Endothelial cell of umbilical vein (primary cell): ENCODE measurements at regions of chr3 and their contacts with region 1.

Region 1: DNA sequence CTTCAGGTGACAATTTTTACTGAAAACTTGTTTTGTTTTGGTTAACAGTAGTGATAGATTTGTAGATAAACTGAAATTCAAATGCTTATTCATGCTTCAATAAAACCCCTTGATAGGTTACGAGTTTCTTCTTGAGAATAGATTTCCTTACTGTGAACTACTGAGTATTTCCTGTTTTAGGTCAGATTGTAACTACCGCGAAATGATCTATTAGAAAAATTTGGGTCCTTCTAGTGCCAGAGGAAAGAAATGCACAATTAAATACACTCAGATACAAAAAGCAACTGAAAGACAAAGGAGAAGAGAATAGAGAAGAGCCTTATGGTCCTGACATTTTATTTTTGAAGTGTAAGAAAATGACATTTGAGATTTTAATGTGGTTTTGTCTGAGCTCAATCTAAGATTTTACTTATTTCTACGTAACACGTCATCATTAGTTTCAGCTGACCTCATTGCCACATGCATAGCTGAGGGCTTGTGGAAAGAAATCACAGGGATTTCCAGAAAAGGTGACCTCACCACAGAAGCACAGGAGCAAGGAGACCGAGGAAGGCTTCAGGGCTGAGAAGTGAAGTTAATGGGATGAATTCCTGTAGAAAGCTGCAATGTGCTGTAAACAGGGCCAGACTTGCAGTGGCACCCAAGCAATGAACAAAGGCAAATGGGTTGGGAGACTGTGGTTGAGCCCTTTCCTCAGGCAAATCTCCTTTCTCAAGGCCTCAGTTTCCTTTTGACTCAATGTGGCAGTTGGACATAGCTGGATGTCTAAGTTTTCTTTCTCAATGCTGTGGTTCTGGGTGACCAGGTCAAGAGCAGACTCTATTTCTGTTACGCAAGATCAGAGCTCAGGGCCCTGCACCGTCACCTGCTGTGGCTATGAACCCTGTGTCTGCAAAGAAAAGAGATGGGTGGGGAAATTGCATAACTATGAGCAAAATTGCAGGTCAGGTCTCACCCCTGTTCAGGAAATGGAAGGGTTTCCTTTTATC is 252.0 kb upstream of the TBL1XR1 start:
- DNase-seq: no peak
- H3K4me3 ChIP-seq: no peak overlapping the region
- H3K27ac ChIP-seq: no peak overlapping the region
- H3K4me1 ChIP-seq: peaks cover 23% of the 10 kb centered on the region
- H3K27me3 ChIP-seq: no peaks in the 10 kb centered on the region
- CTCF ChIP-seq: no peak
- POLR2A ChIP-seq: no peak

Region 2: DNA sequence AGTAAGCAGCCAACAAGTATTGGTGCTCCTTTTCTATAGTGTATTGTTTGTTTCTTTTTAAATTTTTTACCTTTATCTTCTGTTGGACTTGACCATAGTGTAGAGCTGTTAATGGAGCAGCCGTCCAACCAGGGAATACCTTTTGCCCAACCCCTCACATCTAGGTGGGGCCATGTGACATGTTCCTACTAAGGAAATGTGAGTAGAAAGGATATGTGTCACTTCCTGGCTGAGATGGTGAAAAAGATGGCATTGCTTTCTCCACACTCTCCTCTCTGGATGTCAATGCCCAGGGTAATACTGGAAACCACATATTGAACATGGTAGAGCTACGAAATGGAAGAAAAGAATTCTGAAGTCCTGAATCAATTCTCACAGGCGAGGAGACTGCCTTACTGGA is 470.8 kb before region 1 on chr3:
- CTCF ChIA-PET with region 1: no interaction called
- POLR2A ChIA-PET with region 1: no interaction called
- dilution Hi-C with region 1: no loop called
- intact Hi-C with region 1: no loop called
- DNase-seq: peak; percentile 34
- H3K4me3 ChIP-seq: no peak overlapping the region
- H3K27ac ChIP-seq: peak overlapping the region; percentile 2
- H3K4me1 ChIP-seq: peaks cover 9% of the 10 kb centered on the region
- H3K27me3 ChIP-seq: no peaks in the 10 kb centered on the region
- CTCF ChIP-seq: no peak
- POLR2A ChIP-seq: no peak

Region 3: DNA sequence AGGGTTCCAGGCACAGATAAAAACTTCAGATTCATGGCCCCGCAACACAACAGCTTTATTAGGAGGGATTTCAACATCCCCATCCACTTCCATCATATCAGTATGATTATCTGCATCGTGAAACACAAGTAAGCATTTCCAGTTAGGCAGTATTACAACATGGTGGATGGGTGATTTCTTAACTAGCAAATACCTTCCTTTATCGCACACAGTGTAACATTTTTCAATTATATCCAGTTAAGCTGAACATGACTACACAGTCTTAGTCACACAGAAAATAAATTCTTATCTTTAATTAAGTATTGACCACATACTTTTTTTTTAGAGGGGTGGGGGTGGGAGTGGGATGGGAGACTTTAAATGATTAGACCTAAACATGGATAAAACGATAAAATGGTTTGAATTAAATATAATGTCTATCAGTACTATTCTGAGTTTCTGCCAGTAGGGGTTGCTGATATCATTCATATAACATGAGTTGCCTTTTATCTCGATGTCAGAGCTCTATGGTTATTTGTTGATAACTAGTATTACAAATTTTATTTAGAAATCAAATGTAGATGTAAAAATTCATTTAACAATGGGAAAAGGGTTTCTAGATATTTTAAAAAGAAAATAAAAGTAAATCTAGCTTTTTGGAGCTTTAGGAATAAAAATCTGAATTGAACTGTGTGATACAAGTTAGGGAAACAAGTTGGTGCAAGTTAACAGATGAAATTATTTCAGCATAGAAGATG is 398.6 kb before region 1 on chr3:
- CTCF ChIA-PET with region 1: no interaction called
- POLR2A ChIA-PET with region 1: no interaction called
- dilution Hi-C with region 1: no loop called
- intact Hi-C with region 1: loop called (anchors 2 kb)
- DNase-seq: peak; percentile 71
- H3K4me3 ChIP-seq: no peak overlapping the region
- H3K27ac ChIP-seq: no peak overlapping the region
- H3K4me1 ChIP-seq: no peaks in the 10 kb centered on the region
- H3K27me3 ChIP-seq: no peaks in the 10 kb centered on the region
- CTCF ChIP-seq: no peak
- POLR2A ChIP-seq: no peak

Region 4: GRCh38 chr3:177345049-177345972 is 104.0 kb before region 1 on chr3:
- CTCF ChIA-PET with region 1: no interaction called
- POLR2A ChIA-PET with region 1: no interaction called
- dilution Hi-C with region 1: no loop called
- intact Hi-C with region 1: loop called (anchors 1 kb)
- DNase-seq: peak; percentile 97
- H3K4me3 ChIP-seq: peak overlapping the region in 1 of 3 experiments; percentile 28
- H3K27ac ChIP-seq: peak overlapping the region; percentile 99
- H3K4me1 ChIP-seq: peaks cover 34% of the 10 kb centered on the region
- H3K27me3 ChIP-seq: no peaks in the 10 kb centered on the region
- CTCF ChIP-seq: no peak
- POLR2A ChIP-seq: peak; percentile 57

Region 5: DNA sequence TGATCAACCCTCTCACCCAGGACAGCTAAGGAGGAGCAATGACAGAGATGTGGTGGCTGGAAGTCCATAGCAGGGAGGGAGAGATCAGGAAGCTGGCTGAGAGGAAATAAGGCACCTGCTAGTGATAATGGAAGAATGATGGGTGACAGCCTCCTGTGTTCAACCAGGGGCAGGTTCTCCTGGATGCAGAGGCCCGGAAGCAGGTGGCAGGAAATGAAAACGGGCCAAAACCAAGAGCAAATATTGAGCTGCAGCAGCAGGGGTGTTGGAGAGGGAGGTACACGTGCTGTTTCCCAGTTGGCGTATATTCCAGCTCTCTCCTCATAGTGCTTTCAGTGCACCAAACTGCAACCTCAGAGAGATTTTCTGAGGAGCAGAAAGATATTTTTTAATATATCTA is 38.6 kb before region 1 on chr3:
- CTCF ChIA-PET with region 1: no interaction called
- POLR2A ChIA-PET with region 1: no interaction called
- dilution Hi-C with region 1: no loop called
- intact Hi-C with region 1: loop called (anchors 5 kb)
- DNase-seq: peak; percentile 62
- H3K4me3 ChIP-seq: no peak overlapping the region
- H3K27ac ChIP-seq: no peak overlapping the region
- H3K4me1 ChIP-seq: peaks cover 5% of the 10 kb centered on the region
- H3K27me3 ChIP-seq: peaks cover 0 to 3% of the 10 kb centered on the region in 2 experiments
- CTCF ChIP-seq: no peak
- POLR2A ChIP-seq: no peak

Region 6: GRCh38 chr3:177679568-177680441 is 230.5 kb after region 1 on chr3:
- CTCF ChIA-PET with region 1: no interaction called
- POLR2A ChIA-PET with region 1: no interaction called
- dilution Hi-C with region 1: no loop called
- intact Hi-C with region 1: loop called (anchors 5 kb)
- DNase-seq: peak; percentile 76
- H3K4me3 ChIP-seq: no peak overlapping the region
- H3K27ac ChIP-seq: peak overlapping the region; percentile 72
- H3K4me1 ChIP-seq: peaks cover 45% of the 10 kb centered on the region
- H3K27me3 ChIP-seq: no peaks in the 10 kb centered on the region
- CTCF ChIP-seq: no peak
- POLR2A ChIP-seq: no peak

Region 7: GRCh38 chr3:177705976-177706823 is 256.9 kb after region 1 on chr3:
- CTCF ChIA-PET with region 1: no interaction called
- POLR2A ChIA-PET with region 1: no interaction called
- dilution Hi-C with region 1: no loop called
- intact Hi-C with region 1: no loop called
- DNase-seq: no peak
- H3K4me3 ChIP-seq: no peak overlapping the region
- H3K27ac ChIP-seq: no peak overlapping the region
- H3K4me1 ChIP-seq: peaks cover 4% of the 10 kb centered on the region
- H3K27me3 ChIP-seq: no peaks in the 10 kb centered on the region
- CTCF ChIP-seq: no peak
- POLR2A ChIP-seq: no peak